ENCODE measurements at regions of chr1 and their contacts with region 1.

Region 1: DNA sequence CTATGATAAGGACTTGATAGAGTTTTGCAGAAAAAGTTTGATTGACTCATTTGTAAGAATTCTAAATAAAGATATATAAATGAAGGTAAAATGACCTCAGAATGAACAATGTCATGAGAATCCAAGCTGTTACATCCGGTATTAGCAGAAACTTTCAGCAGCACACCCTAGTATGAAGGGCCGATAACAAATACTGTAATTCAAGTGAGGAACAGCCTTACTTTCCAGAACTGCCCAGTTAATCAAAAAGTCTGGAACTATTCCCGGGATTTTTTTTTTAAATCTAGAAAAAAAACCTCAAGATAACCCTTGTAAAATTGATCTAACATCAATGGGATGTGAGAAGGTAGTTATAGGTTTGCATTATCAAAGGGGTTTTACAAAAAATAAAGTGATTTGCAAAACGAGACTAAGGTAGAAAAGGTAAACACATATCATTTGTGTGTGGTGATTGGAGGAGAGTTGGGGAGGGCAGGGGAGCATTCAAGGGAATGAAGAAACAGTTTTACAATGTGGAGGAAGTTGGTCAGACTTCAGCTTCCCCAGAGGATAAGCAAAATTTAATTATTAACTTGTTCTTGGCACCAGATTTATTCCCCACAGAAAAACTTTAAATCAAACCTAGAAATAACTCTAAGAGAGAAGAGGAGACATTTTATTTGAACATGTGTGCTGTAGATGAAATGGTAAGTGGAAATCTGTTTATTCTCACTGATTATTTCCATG is 75.9 kb upstream of the VCAM1 start:
- DNase-seq: peak; percentile 70
- H3K4me3 ChIP-seq: no peak overlapping the region
- H3K27ac ChIP-seq: no peak overlapping the region
- H3K4me1 ChIP-seq: peaks cover 7% of the 10 kb centered on the region
- H3K27me3 ChIP-seq: no peaks in the 10 kb centered on the region
- CTCF ChIP-seq: no peak
- POLR2A ChIP-seq: no peak

Region 2: GRCh38 chr1:100178091-100178490 is 465.5 kb before region 1 on chr1 and contains the start of gene LRRC39:
- CTCF ChIA-PET with region 1: no interaction called
- POLR2A ChIA-PET with region 1: no interaction called
- dilution Hi-C with region 1: no loop called
- intact Hi-C with region 1: no loop called
- DNase-seq: no peak
- H3K4me3 ChIP-seq: no peak within 1 kb of the TSS
- H3K27ac ChIP-seq: no peak within 1 kb of the TSS
- H3K4me1 ChIP-seq: no peaks in the 10 kb centered on the region
- H3K27me3 ChIP-seq: no peaks in the 10 kb centered on the region
- CTCF ChIP-seq: no peak
- POLR2A ChIP-seq: no peak
- total RNA-seq, gene LRRC39: 0.40 and 0.67 TPM in 2 replicates

Region 3: GRCh38 chr1:100606438-100606837 is 37.2 kb before region 1 on chr1:
- CTCF ChIA-PET with region 1: no interaction called
- POLR2A ChIA-PET with region 1: no interaction called
- dilution Hi-C with region 1: no loop called
- intact Hi-C with region 1: no loop called
- DNase-seq: peak; percentile 78
- H3K4me3 ChIP-seq: no peak overlapping the region
- H3K27ac ChIP-seq: no peak overlapping the region
- H3K4me1 ChIP-seq: no peaks in the 10 kb centered on the region
- H3K27me3 ChIP-seq: no peaks in the 10 kb centered on the region
- CTCF ChIP-seq: peak; percentile 53 to 63
- POLR2A ChIP-seq: no peak

Region 4: GRCh38 chr1:100708476-100709062 is 64.9 kb after region 1 on chr1:
- CTCF ChIA-PET with region 1: no interaction called
- POLR2A ChIA-PET with region 1: no interaction called
- dilution Hi-C with region 1: no loop called
- intact Hi-C with region 1: loop called (anchors 2 kb)
- DNase-seq: peak; percentile 85
- H3K4me3 ChIP-seq: no peak overlapping the region
- H3K27ac ChIP-seq: peak overlapping the region; percentile 61
- H3K4me1 ChIP-seq: peaks cover 25% of the 10 kb centered on the region
- H3K27me3 ChIP-seq: no peaks in the 10 kb centered on the region
- CTCF ChIP-seq: no peak
- POLR2A ChIP-seq: no peak

Region 5: DNA sequence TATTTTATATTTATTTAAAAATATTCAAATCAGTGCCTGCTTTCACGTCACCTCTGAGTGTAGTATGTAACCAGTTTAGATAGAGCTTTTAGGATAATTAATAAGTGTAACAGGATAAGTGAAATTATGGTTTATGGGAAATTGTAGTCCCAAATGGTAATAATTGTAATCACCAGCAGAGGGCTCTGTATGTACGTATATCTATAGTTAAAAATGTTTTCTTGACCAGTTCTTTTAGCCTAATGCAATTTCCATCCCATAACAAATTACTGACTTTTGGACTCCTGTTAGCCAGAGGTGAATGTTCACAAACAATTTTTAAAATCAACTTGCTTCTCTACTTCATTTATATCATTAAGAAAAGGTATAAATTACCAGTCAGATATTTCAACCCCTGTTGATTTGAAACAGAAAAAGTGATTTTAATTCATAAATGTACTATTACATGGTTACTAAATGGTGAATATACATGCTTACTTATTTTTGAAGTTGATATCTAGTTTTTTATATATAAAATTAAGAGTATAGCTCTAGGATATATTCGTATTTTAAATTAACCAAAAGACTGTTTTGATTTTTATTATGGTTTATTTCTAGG is 277.6 kb after region 1 on chr1:
- CTCF ChIA-PET with region 1: no interaction called
- POLR2A ChIA-PET with region 1: no interaction called
- dilution Hi-C with region 1: no loop called
- intact Hi-C with region 1: no loop called
- DNase-seq: peak; percentile 81
- H3K4me3 ChIP-seq: no peak overlapping the region
- H3K27ac ChIP-seq: no peak overlapping the region
- H3K4me1 ChIP-seq: peaks cover 11% of the 10 kb centered on the region
- H3K27me3 ChIP-seq: no peaks in the 10 kb centered on the region
- CTCF ChIP-seq: peak; percentile 24
- POLR2A ChIP-seq: no peak